HCT116 (cell line): ENCODE measurements at regions of chr16 and their contacts with region 1.

Region 1: DNA sequence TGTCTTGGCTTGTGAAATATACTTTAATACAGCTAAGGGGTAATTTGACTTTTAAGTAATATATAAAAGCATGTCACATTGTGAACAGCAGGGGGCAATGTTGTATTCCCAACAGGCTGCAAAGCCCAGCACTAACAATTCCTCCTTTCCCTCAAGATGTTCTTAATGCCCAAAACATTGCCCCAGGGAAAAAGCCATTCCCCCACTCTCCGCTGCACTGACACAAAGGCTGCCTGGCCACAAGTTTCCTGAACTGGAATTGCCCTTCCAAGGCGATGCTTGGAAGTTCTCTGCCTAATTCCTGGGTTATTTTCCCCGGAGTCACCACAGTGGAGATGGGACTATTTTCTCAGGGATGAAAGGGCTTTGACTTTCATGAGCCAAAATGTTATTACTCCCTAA is 27.2 kb downstream of the CLEC16A start:
- DNase-seq: peak; percentile 47
- ATAC-seq: peak; percentile 74
- H3K4me3 ChIP-seq: no peak overlapping the region
- H3K27ac ChIP-seq: no peak overlapping the region
- H3K4me1 ChIP-seq: no peaks in the 10 kb centered on the region; a peak in 1 of 4 replicates
- H3K27me3 ChIP-seq: no peaks in the 10 kb centered on the region
- CTCF ChIP-seq: peak; percentile 66 to 89 (median 84)
- POLR2A ChIP-seq: no peak
- RAD21 ChIP-seq: peak; percentile 98

Region 2: DNA sequence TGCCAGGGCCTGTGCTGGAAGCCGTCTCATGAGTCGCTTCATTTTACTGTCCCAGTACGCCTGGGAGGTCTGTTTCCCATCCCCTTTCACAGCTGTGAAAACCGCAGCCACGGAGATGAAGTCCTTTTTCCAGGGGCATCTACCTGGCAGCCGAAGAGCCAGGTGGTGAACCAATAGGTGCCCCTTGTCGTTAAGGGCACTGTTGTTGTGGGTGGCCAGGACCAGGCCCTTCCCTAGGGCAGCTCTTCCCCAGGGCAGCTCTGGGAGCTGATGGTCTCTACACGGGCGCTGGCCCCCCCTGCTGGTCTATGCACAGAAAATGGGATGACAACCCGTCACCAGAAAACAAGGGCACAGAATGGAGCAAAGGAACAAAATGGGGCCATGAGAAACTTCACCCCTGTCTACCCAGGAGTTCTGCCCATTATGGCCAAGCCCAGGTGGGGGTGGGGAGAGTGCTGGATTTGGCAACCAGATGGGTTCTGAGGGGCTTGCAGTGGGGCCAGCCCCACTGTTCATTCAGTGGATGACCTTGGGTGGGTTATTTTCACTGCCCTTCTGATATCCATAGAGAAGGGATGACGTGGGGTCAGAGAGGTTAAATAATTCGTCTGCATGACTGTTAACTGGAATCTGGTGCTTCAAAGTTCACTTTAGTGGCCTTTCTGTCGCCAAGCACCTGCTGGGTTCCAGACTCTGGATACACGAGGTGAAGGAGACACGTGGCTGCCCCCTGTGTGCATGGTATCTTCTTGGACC is 385.2 kb after region 1 on chr16:
- CTCF ChIA-PET with region 1: interaction called, 18 read pairs
- POLR2A ChIA-PET with region 1: interaction called, 5 read pairs
- RAD21 ChIA-PET with region 1: interaction called, 3 read pairs
- intact Hi-C with region 1: loop called (anchors 1 kb)
- DNase-seq: no peak
- ATAC-seq: peak; percentile 72
- H3K4me3 ChIP-seq: peak overlapping the region in 1 of 2 experiments; percentile 37; a peak in 2 of 4 replicates
- H3K27ac ChIP-seq: peak overlapping the region; percentile 59
- H3K4me1 ChIP-seq: peaks cover 34 to 46% of the 10 kb centered on the region in 2 experiments
- H3K27me3 ChIP-seq: no peaks in the 10 kb centered on the region
- CTCF ChIP-seq: peak; percentile 57 to 73 (median 68); a peak in 5 of 6 replicates
- POLR2A ChIP-seq: no peak
- RAD21 ChIP-seq: peak; percentile 85

Region 3: GRCh38 chr16:11370084-11370931 is 398.7 kb after region 1 on chr16:
- CTCF ChIA-PET with region 1: interaction called, 15 read pairs
- POLR2A ChIA-PET with region 1: no interaction called
- RAD21 ChIA-PET with region 1: no interaction called
- intact Hi-C with region 1: no loop called
- DNase-seq: no peak
- ATAC-seq: no peak
- H3K4me3 ChIP-seq: no peak overlapping the region
- H3K27ac ChIP-seq: no peak overlapping the region
- H3K4me1 ChIP-seq: peaks cover 0 to 5% of the 10 kb centered on the region in 2 experiments; a peak in 2 of 4 replicates
- H3K27me3 ChIP-seq: no peaks in the 10 kb centered on the region
- CTCF ChIP-seq: no peak
- POLR2A ChIP-seq: no peak
- RAD21 ChIP-seq: no peak

Region 4: DNA sequence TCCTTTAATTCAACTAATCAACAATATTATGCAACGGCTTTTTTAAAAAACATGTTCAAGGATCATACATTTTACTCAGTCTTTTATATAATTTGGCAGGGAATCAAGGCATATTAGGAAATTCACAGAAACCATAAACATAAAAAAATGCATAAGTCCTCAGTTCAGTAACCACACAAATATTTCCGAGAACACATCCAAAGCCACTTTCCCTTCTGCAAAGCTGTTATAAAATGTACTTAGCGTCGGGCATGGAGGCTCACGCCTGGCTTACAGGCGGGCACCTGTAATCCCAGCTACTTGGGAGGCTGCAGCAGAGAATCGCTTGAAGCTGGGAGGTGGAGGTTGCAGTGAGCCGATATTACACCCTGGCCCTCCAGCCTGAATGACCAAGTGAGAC is 835.2 kb after region 1 on chr16:
- CTCF ChIA-PET with region 1: no interaction called
- POLR2A ChIA-PET with region 1: no interaction called
- RAD21 ChIA-PET with region 1: no interaction called
- intact Hi-C with region 1: loop called (anchors 5 kb)
- DNase-seq: no peak
- ATAC-seq: no peak
- H3K4me3 ChIP-seq: no peak overlapping the region
- H3K27ac ChIP-seq: no peak overlapping the region
- H3K4me1 ChIP-seq: peaks cover 0 to under 1% of the 10 kb centered on the region in 2 experiments; a peak in 1 of 4 replicates
- H3K27me3 ChIP-seq: no peaks in the 10 kb centered on the region
- CTCF ChIP-seq: no peak
- POLR2A ChIP-seq: no peak
- RAD21 ChIP-seq: no peak